ENCODE measurements at regions of chr11 and their contacts with region 1.

Region 1: GRCh38 chr11:62556108-62556871 is 9.7 kb upstream of the AHNAK start:
- DNase-seq: peak; percentile 63 to 77
- H3K4me3 ChIP-seq: no peak overlapping the region
- H3K27ac ChIP-seq: peak overlapping the region; percentile 67
- H3K4me1 ChIP-seq: peaks cover 32 to 68% (median 39%) of the 10 kb centered on the region in 4 experiments
- H3K27me3 ChIP-seq: no peaks in the 10 kb centered on the region
- CTCF ChIP-seq: no peak
- EP300 ChIP-seq: no peak
- POLR2A ChIP-seq: peak; percentile 20 to 36; a peak in 2 of 3 replicates
- RAD21 ChIP-seq: no peak

Region 2: GRCh38 chr11:62419314-62419929 is 136.9 kb before region 1 on chr11:
- CTCF ChIA-PET with region 1: interaction called, 85 read pairs
- POLR2A ChIA-PET with region 1: interaction called, 19 read pairs
- DNase-seq: no peak
- H3K4me3 ChIP-seq: no peak overlapping the region
- H3K27ac ChIP-seq: no peak overlapping the region
- H3K4me1 ChIP-seq: no peaks in the 10 kb centered on the region
- H3K27me3 ChIP-seq: peaks cover 0 to 12% (median 9%) of the 10 kb centered on the region in 4 experiments; a peak in 6 of 7 replicates
- CTCF ChIP-seq: no peak
- EP300 ChIP-seq: no peak
- POLR2A ChIP-seq: no peak
- RAD21 ChIP-seq: no peak

Region 3: GRCh38 chr11:62444236-62444833 is 112.0 kb before region 1 on chr11:
- CTCF ChIA-PET with region 1: interaction called, 10 read pairs
- POLR2A ChIA-PET with region 1: interaction called, 7 read pairs
- DNase-seq: no peak
- H3K4me3 ChIP-seq: no peak overlapping the region; a peak in 1 of 8 replicates
- H3K27ac ChIP-seq: no peak overlapping the region
- H3K4me1 ChIP-seq: peaks cover 0 to 6% (median 0%) of the 10 kb centered on the region in 4 experiments; a peak in 2 of 7 replicates
- H3K27me3 ChIP-seq: no peaks in the 10 kb centered on the region
- CTCF ChIP-seq: no peak
- EP300 ChIP-seq: no peak
- POLR2A ChIP-seq: no peak
- RAD21 ChIP-seq: no peak

Region 4: DNA sequence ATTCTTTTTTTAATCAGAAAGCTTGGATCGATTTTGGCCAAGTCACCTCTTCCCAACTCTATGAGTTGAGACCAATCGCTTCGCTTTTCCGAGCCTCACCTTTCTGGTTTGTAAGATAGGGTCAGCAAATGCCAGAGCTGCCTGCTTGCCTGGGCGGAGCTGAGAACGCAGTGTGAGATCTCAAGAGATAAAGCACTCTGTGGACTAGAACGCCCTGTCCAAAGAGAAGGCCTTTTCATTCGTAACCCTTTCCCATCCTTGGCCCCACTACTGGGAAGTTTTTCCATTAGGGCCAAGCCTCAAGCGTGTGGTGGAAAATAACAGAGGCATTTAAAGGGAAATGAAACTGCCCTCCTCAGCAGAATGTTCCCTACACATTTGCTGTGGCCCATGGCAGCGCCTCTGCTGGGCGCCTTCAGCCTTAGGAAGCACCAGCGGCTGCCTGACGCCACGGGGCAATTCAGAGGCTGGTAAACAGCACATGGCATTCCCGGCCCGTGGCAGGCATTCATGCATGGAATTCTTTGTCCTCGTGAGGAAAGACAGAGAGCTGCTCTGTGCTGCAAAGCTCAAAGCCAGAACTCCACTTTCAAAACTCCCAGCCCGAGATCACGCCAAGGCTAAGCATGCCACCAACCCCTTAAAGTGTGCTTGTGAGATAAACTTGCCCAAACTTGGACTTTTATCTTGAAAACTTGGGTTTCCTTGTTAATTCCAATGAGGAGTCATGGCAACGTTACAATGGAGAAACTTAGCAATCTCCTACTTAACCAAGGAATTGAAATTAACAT is 47.8 kb before region 1 on chr11:
- CTCF ChIA-PET with region 1: interaction called, 32 read pairs
- POLR2A ChIA-PET with region 1: interaction called, 8 read pairs
- DNase-seq: peak; percentile 43 to 77
- H3K4me3 ChIP-seq: peak overlapping the region in 3 of 4 experiments; percentile 6 to 26 (median 7); a peak in 4 of 8 replicates
- H3K27ac ChIP-seq: peak overlapping the region; percentile 48
- H3K4me1 ChIP-seq: peaks cover 8 to 21% (median 15%) of the 10 kb centered on the region in 4 experiments
- H3K27me3 ChIP-seq: peaks cover 0 to 11% (median 4%) of the 10 kb centered on the region in 4 experiments; a peak in 4 of 7 replicates
- CTCF ChIP-seq: peak; percentile 24 to 68 (median 64); a peak in 3 of 4 replicates
- EP300 ChIP-seq: no peak; a peak in 1 of 3 replicates
- POLR2A ChIP-seq: no peak
- RAD21 ChIP-seq: peak; percentile 29 to 33; a peak in 2 of 4 replicates

Region 5: GRCh38 chr11:62831520-62832335 is 275.4 kb after region 1 on chr11 and contains the start of gene STX5:
- CTCF ChIA-PET with region 1: no interaction called
- POLR2A ChIA-PET with region 1: no interaction called
- DNase-seq: peak; percentile 96 to 99
- H3K4me3 ChIP-seq: peak within 1 kb of the TSS; percentile 76 to 94 (median 92)
- H3K27ac ChIP-seq: peak within 1 kb of the TSS; percentile 95
- H3K4me1 ChIP-seq: peaks cover 0 to 17% (median 2%) of the 10 kb centered on the region in 4 experiments; a peak in 2 of 7 replicates
- H3K27me3 ChIP-seq: no peaks in the 10 kb centered on the region
- CTCF ChIP-seq: no peak
- EP300 ChIP-seq: no peak
- POLR2A ChIP-seq: peak; percentile 53 to 96; a peak in 2 of 3 replicates
- RAD21 ChIP-seq: no peak
- total RNA-seq, gene STX5: 24.2 and 25.3 TPM in 2 replicates

Measured in H1 (cell line).